Naive thymus-derived CD4-positive, alpha-beta T cell (primary cell): ENCODE measurements at regions of chr6 and their contacts with region 1.

Region 1: DNA sequence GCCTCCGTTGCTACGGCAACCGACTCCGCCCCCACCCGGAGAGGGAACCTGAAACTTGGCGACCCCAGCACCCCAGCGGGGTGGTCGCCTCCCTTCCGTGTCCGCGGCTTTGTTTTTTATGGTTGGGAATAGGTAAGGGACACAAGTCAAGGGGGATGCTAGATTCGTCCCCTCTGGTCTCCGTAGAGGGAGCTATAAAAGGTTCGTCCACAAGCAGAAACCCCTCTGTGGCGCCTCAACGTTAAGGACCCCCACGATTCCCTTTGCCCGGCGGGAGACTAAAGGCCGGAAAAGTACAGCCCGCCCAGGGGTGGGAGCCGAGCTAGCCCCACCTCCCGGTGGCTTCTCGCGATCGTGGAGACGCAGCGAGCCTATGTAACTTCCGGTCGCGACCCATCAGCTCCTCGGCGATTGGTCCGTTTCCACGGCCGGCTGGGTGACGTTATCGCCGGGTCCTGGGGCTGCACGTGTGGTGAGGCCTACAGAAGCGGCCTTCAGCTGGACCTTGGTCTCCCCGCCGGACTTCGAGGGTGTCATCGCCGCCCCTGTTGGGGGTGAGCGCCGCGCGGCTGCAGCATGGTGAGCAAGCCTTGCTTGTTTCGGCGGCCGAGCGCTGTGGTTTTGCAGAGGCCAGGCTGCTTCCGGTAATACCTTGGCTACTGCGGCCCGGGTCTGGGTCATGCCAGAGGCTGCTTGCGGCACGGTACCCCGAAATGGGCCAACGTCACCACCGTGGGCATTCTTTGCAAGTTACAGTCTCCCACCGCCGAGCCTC is at the start of gene LTV1:
- DNase-seq: peak; percentile 82 to 90 (median 88)
- ATAC-seq: peak; percentile 98
- H3K4me3 ChIP-seq: peak within 1 kb of the TSS; percentile 99
- H3K4me3 Mint-ChIP-seq: peak within 1 kb of the TSS; percentile 93 to 99 (median 96)
- H3K27ac ChIP-seq: peak within 1 kb of the TSS; percentile 92
- H3K27ac Mint-ChIP-seq: peak within 1 kb of the TSS; percentile 91 to 99 (median 97)
- H3K4me1 ChIP-seq: peaks cover 6 to 11% of the 10 kb centered on the region in 2 donors
- H3K4me1 Mint-ChIP-seq: peaks cover 19 to 42% (median 32%) of the 10 kb centered on the region in 7 donors
- H3K27me3 ChIP-seq: no peaks in the 10 kb centered on the region
- H3K27me3 Mint-ChIP-seq: no peaks in the 10 kb centered on the region
- total RNA-seq, gene LTV1: 16.5 to 29.6 (median 22.6) TPM

Region 2: GRCh38 chr6:143060354-143060805 is 782.7 kb before region 1 on chr6:
- CTCF ChIA-PET with region 1: no interaction called
- POLR2A ChIA-PET with region 1: no interaction called
- intact Hi-C with region 1: loop called in 1 of 2 experiments (anchors 2 kb)
- DNase-seq: peak; percentile 63 to 82 (median 72)
- ATAC-seq: peak; percentile 85
- H3K4me3 ChIP-seq: peak overlapping the region; percentile 73
- H3K4me3 Mint-ChIP-seq: peak overlapping the region; percentile 88 to 98 (median 94)
- H3K27ac ChIP-seq: peak overlapping the region; percentile 79
- H3K27ac Mint-ChIP-seq: peak overlapping the region; percentile 92 to 98 (median 96)
- H3K4me1 ChIP-seq: peaks cover 8% of the 10 kb centered on the region in 2 donors
- H3K4me1 Mint-ChIP-seq: peaks cover 16 to 34% (median 28%) of the 10 kb centered on the region in 7 donors
- H3K27me3 ChIP-seq: no peaks in the 10 kb centered on the region
- H3K27me3 Mint-ChIP-seq: no peaks in the 10 kb centered on the region

Region 3: DNA sequence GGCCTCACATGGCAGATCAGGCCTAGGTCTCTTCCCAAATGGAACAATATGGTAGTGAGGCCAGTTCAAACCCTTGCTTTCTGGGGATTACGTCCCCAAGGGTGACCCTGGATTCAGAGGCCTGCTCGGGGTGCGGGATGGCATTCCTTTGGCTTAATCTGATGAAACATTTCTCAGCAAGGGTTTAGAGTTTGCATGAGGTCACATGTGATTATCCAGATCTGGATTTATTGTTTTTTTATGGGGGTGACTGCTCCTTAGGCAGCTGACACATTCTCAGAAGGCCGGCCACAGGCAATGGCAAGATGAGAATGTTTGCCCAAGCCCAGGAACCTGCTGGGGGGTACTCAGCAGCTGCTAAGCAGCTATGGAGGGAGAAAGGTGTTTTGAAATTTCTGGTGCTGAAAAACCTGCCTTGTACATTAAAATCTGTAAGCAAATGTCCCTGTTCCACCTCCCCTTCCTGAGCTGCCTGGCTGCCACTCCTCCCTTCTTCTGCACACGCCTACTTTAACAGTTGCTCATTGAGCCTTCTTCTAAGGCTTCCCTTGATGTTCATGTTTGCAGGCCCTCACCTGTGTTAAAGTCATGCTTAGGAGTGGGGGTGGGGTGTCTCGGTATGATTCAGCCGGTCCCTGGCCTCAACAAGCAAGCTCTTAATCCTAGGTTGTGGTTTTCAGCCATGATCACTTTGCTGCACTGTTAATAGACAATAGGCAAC is 293.7 kb before region 1 on chr6:
- CTCF ChIA-PET with region 1: no interaction called
- POLR2A ChIA-PET with region 1: no interaction called
- intact Hi-C with region 1: loop called in 1 of 2 experiments (anchors 2 kb)
- DNase-seq: peak in 1 of 9 donors; percentile 45
- ATAC-seq: peak; percentile 47
- H3K4me3 ChIP-seq: no peak overlapping the region
- H3K4me3 Mint-ChIP-seq: peak overlapping the region in 3 of 10 donors; percentile 4 to 43 (median 10)
- H3K27ac ChIP-seq: no peak overlapping the region
- H3K27ac Mint-ChIP-seq: peak overlapping the region in 4 of 9 donors; percentile 20 to 66 (median 66)
- H3K4me1 ChIP-seq: peaks cover 43 to 71% of the 10 kb centered on the region in 2 donors
- H3K4me1 Mint-ChIP-seq: peaks cover 37 to 86% (median 73%) of the 10 kb centered on the region in 7 donors
- H3K27me3 ChIP-seq: no peaks in the 10 kb centered on the region
- H3K27me3 Mint-ChIP-seq: no peaks in the 10 kb centered on the region

Region 4: GRCh38 chr6:143806282-143807102 is 36.6 kb before region 1 on chr6:
- CTCF ChIA-PET with region 1: no interaction called
- POLR2A ChIA-PET with region 1: no interaction called
- intact Hi-C with region 1: loop called in 1 of 2 experiments (anchors 2 kb)
- DNase-seq: peak in 1 of 9 donors; percentile 84
- ATAC-seq: peak; percentile 48
- H3K4me3 ChIP-seq: no peak overlapping the region
- H3K4me3 Mint-ChIP-seq: peak overlapping the region in 1 of 10 donors; percentile 25
- H3K27ac ChIP-seq: no peak overlapping the region
- H3K27ac Mint-ChIP-seq: peak overlapping the region in 1 of 9 donors; percentile 62
- H3K4me1 ChIP-seq: no peaks in the 10 kb centered on the region
- H3K4me1 Mint-ChIP-seq: peaks cover 0 to 33% (median 4%) of the 10 kb centered on the region in 7 donors
- H3K27me3 ChIP-seq: no peaks in the 10 kb centered on the region
- H3K27me3 Mint-ChIP-seq: no peaks in the 10 kb centered on the region

Region 5: GRCh38 chr6:144063744-144064401 is 220.8 kb after region 1 on chr6:
- CTCF ChIA-PET with region 1: no interaction called
- POLR2A ChIA-PET with region 1: no interaction called
- intact Hi-C with region 1: loop called (anchors 1 kb)
- DNase-seq: peak; percentile 84 to 91 (median 88)
- ATAC-seq: peak; percentile 96
- H3K4me3 ChIP-seq: peak overlapping the region; percentile 56
- H3K4me3 Mint-ChIP-seq: peak overlapping the region; percentile 87 to 94 (median 91)
- H3K27ac ChIP-seq: peak overlapping the region; percentile 85
- H3K27ac Mint-ChIP-seq: peak overlapping the region; percentile 83 to 97 (median 88)
- H3K4me1 ChIP-seq: peaks cover 0 to 12% of the 10 kb centered on the region in 2 donors
- H3K4me1 Mint-ChIP-seq: peaks cover 17 to 44% (median 29%) of the 10 kb centered on the region in 7 donors
- H3K27me3 ChIP-seq: no peaks in the 10 kb centered on the region
- H3K27me3 Mint-ChIP-seq: peaks cover 0 to 2% (median 0%) of the 10 kb centered on the region in 5 donors

Region 6: GRCh38 chr6:144343701-144344428 is 500.8 kb after region 1 on chr6:
- CTCF ChIA-PET with region 1: no interaction called
- POLR2A ChIA-PET with region 1: no interaction called
- intact Hi-C with region 1: loop called in 1 of 2 experiments (anchors 5 kb)
- DNase-seq: peak in 8 of 9 donors; percentile 37 to 85 (median 76)
- ATAC-seq: peak; percentile 88
- H3K4me3 ChIP-seq: peak overlapping the region; percentile 67
- H3K4me3 Mint-ChIP-seq: peak overlapping the region; percentile 80 to 99 (median 94)
- H3K27ac ChIP-seq: peak overlapping the region; percentile 75
- H3K27ac Mint-ChIP-seq: peak overlapping the region; percentile 87 to 99 (median 96)
- H3K4me1 ChIP-seq: peaks cover 58 to 62% of the 10 kb centered on the region in 2 donors
- H3K4me1 Mint-ChIP-seq: peaks cover 68 to 93% (median 84%) of the 10 kb centered on the region in 7 donors
- H3K27me3 ChIP-seq: no peaks in the 10 kb centered on the region
- H3K27me3 Mint-ChIP-seq: no peaks in the 10 kb centered on the region